Activated CD8-positive, alpha-beta T cell treated with anti-CD3 and anti-CD28 coated beads, Interleukin-2, amount 10 ng/mL, durations not matched to agents 7 days and 5 days (primary cell): ENCODE measurements at regions of chr14 and their contacts with region 1.

Region 1: GRCh38 chr14:70821584-70822529 is 12.5 kb upstream of the MAP3K9 start:
- DNase-seq: peak; percentile 65
- ATAC-seq: peak; percentile 69
- H3K4me3 Mint-ChIP-seq: peak overlapping the region; percentile 81
- H3K27ac Mint-ChIP-seq: no peak overlapping the region
- H3K4me1 Mint-ChIP-seq: peaks cover 37% of the 10 kb centered on the region
- H3K27me3 Mint-ChIP-seq: peaks cover 31% of the 10 kb centered on the region

Region 2: GRCh38 chr14:70648346-70648745 is 173.5 kb before region 1 on chr14:
- CTCF ChIA-PET with region 1: interaction called, 10 read pairs
- POLR2A ChIA-PET with region 1: no interaction called
- DNase-seq: no peak
- ATAC-seq: no peak
- H3K4me3 Mint-ChIP-seq: no peak overlapping the region
- H3K27ac Mint-ChIP-seq: no peak overlapping the region
- H3K4me1 Mint-ChIP-seq: peaks cover 70% of the 10 kb centered on the region
- H3K27me3 Mint-ChIP-seq: no peaks in the 10 kb centered on the region

Region 3: DNA sequence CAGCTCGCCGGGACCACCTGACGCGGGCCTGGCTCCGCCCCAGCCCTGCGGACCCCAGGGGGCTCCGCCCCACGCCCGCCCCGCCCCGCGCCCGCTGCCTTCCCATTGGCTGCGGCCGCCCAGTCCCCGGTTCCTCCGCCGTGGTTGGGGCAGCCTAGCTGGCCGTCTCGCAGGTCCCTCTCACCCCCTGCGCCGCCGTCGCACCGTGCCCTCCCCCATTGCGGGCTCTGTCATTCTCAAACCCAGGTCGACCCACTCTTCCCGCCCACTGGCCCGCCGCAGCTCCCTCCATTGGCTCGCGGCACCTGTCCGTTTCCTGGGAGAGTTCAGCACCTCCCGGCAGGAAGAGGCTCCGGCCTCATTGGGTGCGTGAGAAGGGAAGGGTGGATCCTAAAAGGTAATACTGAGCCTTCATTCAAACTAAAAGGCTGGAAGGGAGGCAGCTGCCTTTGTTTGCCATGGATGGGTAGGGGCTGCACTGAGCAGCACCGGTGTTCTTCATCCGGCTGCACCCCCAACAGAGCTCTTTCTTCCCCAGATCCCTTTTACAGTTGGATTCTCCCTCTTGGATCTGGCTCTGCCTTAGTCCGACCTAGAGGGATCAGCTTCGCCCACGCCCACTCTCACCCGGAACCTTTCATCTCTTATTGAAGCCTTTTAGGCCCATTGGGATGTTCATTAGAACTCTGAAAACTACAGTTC is 12.2 kb before region 1 on chr14:
- CTCF ChIA-PET with region 1: interaction called, 25 read pairs
- POLR2A ChIA-PET with region 1: interaction called, 11 read pairs
- DNase-seq: peak; percentile 97
- ATAC-seq: peak; percentile 90
- H3K4me3 Mint-ChIP-seq: no peak overlapping the region
- H3K27ac Mint-ChIP-seq: no peak overlapping the region
- H3K4me1 Mint-ChIP-seq: peaks cover 15% of the 10 kb centered on the region
- H3K27me3 Mint-ChIP-seq: peaks cover 2% of the 10 kb centered on the region

Region 4: DNA sequence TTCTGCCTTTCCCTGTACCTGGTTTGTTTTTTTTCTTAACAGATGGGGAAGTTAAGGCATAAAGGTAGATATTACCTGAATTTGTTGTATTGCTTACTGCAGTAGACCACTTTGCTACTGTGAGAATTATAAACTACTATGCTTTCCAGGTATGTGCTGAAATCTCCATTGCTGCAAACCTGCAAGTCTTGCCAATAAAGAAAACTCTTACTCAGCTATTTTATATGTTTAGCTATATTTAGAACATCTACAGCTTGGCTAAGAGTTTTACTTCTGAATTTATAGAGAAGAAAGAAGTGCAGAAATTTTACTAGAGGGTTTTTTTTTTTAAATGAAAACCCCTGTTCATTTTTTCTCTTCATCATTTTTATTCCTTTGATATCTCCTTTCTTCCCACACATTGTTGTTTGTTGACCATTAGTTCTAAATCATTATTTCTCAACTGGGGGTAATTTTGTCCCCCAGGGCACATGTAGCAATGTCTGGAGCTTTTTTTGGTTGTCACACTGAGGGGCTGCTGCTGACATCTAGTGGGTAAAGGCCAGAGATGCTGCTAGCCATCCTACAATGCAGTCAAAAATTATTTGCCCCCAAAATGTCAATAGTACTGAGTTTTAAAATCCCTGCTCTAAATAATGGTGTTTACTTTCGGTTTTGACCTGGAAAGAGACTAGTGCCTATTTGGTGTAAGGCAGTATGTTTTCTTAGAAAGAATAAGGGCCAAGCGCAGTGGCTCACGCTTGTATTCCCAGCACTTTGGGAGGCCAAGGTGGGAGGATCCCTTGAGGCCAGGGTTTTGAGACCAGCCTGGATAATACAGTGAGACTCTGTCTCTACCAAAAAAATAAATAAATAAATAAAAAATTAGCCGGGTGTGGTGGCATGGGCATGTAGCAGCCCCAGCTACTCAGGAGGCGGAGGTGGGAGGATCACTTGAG is 134.0 kb after region 1 on chr14:
- CTCF ChIA-PET with region 1: interaction called, 114 read pairs
- POLR2A ChIA-PET with region 1: no interaction called
- DNase-seq: peak; percentile 64
- ATAC-seq: peak; percentile 75
- H3K4me3 Mint-ChIP-seq: no peak overlapping the region
- H3K27ac Mint-ChIP-seq: no peak overlapping the region
- H3K4me1 Mint-ChIP-seq: peaks cover 23% of the 10 kb centered on the region
- H3K27me3 Mint-ChIP-seq: no peaks in the 10 kb centered on the region

Region 5: GRCh38 chr14:70981000-70981952 is 159.4 kb after region 1 on chr14:
- CTCF ChIA-PET with region 1: interaction called, 22 read pairs
- POLR2A ChIA-PET with region 1: no interaction called
- DNase-seq: no peak
- ATAC-seq: peak; percentile 44
- H3K4me3 Mint-ChIP-seq: peak overlapping the region; percentile 19
- H3K27ac Mint-ChIP-seq: peak overlapping the region; percentile 81
- H3K4me1 Mint-ChIP-seq: peaks cover 22% of the 10 kb centered on the region
- H3K27me3 Mint-ChIP-seq: no peaks in the 10 kb centered on the region

Region 6: GRCh38 chr14:71011479-71011878 is 189.6 kb after region 1 on chr14:
- CTCF ChIA-PET with region 1: interaction called, 11 read pairs
- POLR2A ChIA-PET with region 1: no interaction called
- DNase-seq: no peak
- ATAC-seq: no peak
- H3K4me3 Mint-ChIP-seq: no peak overlapping the region
- H3K27ac Mint-ChIP-seq: no peak overlapping the region
- H3K4me1 Mint-ChIP-seq: peaks cover 3% of the 10 kb centered on the region
- H3K27me3 Mint-ChIP-seq: no peaks in the 10 kb centered on the region

Region 7: DNA sequence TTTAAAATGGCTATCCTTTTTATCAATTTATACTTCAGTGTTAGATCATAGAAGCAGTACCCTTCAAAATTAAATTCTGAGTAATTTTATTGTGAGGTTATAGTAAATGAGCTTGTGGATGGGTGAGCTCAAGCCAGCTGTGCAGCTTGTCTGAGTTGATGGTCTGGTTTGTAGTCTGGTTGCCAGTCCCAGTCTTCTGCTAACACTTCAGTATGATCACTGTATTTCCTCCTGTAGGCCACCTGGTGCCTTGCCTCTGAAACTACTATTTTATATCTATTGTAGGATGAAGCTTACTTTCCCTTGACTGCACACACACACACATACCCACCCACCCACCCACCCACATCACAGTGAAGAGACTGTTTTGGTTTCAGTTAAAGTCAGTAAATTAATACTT is 581.8 kb after region 1 on chr14:
- CTCF ChIA-PET with region 1: no interaction called
- POLR2A ChIA-PET with region 1: no interaction called
- DNase-seq: peak; percentile 59
- ATAC-seq: peak; percentile 74
- H3K4me3 Mint-ChIP-seq: no peak overlapping the region
- H3K27ac Mint-ChIP-seq: peak overlapping the region; percentile 36
- H3K4me1 Mint-ChIP-seq: peaks cover 31% of the 10 kb centered on the region
- H3K27me3 Mint-ChIP-seq: no peaks in the 10 kb centered on the region